Activated naive CD4-positive, alpha-beta T cell treated with anti-CD3 and anti-CD28 coated beads, Interleukin-2, amount 10 ng/mL, durations not matched to agents 7 days and 5 days (primary cell): ENCODE measurements at regions of chr12 and their contacts with region 1.

Region 1: GRCh38 chr12:75480469-75480949 is at the start of gene GLIPR1:
- DNase-seq: peak; percentile 76
- H3K4me3 Mint-ChIP-seq: peak within 1 kb of the TSS; percentile 93
- H3K27ac Mint-ChIP-seq: peak within 1 kb of the TSS; percentile 98
- H3K4me1 Mint-ChIP-seq: peaks cover 83% of the 10 kb centered on the region
- H3K27me3 Mint-ChIP-seq: no peaks in the 10 kb centered on the region

Region 2: DNA sequence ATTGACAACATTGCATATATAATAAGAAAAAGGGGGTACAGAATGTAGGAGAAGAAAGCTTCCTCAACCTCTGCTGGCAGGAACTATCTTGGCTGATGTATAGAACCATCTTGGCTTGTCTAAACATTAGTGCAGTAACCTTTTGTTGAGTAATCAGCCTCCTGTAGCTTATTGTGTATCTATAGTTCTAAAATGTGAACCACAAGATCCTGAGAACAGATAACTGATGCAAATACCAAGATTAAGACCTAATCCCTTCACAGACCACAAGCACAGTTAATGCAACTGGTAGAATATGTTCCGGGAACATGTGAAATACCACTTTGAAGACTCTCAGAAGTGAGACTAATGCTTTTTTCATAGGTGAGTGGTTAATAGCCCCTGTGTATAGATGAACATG is 220.2 kb before region 1 on chr12:
- CTCF ChIA-PET with region 1: no interaction called
- DNase-seq: no peak
- H3K4me3 Mint-ChIP-seq: no peak overlapping the region
- H3K27ac Mint-ChIP-seq: no peak overlapping the region
- H3K4me1 Mint-ChIP-seq: peaks cover 12% of the 10 kb centered on the region
- H3K27me3 Mint-ChIP-seq: no peaks in the 10 kb centered on the region

Region 3: GRCh38 chr12:75334384-75335030 is 146.0 kb before region 1 on chr12 and contains the start of gene GLIPR1L1:
- CTCF ChIA-PET with region 1: interaction called, 18 read pairs
- DNase-seq: peak; percentile 87
- H3K4me3 Mint-ChIP-seq: peak within 1 kb of the TSS; percentile 48
- H3K27ac Mint-ChIP-seq: no peak within 1 kb of the TSS
- H3K4me1 Mint-ChIP-seq: peaks cover 30% of the 10 kb centered on the region
- H3K27me3 Mint-ChIP-seq: peaks cover 30% of the 10 kb centered on the region

Region 4: DNA sequence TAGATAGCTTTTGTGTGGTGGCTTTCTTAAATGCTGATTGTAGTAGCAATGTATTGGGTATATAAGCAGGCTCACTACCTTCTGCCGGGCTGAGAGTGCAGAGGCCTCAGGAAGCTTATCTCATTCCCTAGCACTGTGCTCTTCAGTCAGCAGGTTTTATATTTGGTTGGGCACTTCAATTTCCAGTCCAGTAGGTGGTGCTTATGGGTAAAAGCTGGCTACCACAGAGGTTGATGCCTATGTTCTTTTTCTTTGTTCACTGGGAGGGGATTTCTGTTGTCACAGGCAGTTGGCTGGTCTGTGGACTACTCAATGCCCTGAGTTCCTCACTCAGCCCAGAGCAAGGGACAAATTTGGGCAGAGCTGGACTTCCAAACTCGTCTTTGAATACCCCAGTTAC is 42.9 kb before region 1 on chr12:
- CTCF ChIA-PET with region 1: interaction called, 27 read pairs
- DNase-seq: peak; percentile 29
- H3K4me3 Mint-ChIP-seq: no peak overlapping the region
- H3K27ac Mint-ChIP-seq: no peak overlapping the region
- H3K4me1 Mint-ChIP-seq: peaks cover 19% of the 10 kb centered on the region
- H3K27me3 Mint-ChIP-seq: peaks cover 31% of the 10 kb centered on the region

Region 5: GRCh38 chr12:75511116-75512048 is 30.9 kb after region 1 on chr12 and contains the start of gene KRR1:
- CTCF ChIA-PET with region 1: interaction called, 35 read pairs
- DNase-seq: peak; percentile 94
- H3K4me3 Mint-ChIP-seq: peak within 1 kb of the TSS; percentile 97
- H3K27ac Mint-ChIP-seq: peak within 1 kb of the TSS; percentile 99
- H3K4me1 Mint-ChIP-seq: peaks cover 34% of the 10 kb centered on the region
- H3K27me3 Mint-ChIP-seq: no peaks in the 10 kb centered on the region

Region 6: GRCh38 chr12:75542942-75543341 is 62.4 kb after region 1 on chr12:
- CTCF ChIA-PET with region 1: no interaction called
- DNase-seq: no peak
- H3K4me3 Mint-ChIP-seq: no peak overlapping the region
- H3K27ac Mint-ChIP-seq: no peak overlapping the region
- H3K4me1 Mint-ChIP-seq: no peaks in the 10 kb centered on the region
- H3K27me3 Mint-ChIP-seq: peaks cover 7% of the 10 kb centered on the region

Region 7: DNA sequence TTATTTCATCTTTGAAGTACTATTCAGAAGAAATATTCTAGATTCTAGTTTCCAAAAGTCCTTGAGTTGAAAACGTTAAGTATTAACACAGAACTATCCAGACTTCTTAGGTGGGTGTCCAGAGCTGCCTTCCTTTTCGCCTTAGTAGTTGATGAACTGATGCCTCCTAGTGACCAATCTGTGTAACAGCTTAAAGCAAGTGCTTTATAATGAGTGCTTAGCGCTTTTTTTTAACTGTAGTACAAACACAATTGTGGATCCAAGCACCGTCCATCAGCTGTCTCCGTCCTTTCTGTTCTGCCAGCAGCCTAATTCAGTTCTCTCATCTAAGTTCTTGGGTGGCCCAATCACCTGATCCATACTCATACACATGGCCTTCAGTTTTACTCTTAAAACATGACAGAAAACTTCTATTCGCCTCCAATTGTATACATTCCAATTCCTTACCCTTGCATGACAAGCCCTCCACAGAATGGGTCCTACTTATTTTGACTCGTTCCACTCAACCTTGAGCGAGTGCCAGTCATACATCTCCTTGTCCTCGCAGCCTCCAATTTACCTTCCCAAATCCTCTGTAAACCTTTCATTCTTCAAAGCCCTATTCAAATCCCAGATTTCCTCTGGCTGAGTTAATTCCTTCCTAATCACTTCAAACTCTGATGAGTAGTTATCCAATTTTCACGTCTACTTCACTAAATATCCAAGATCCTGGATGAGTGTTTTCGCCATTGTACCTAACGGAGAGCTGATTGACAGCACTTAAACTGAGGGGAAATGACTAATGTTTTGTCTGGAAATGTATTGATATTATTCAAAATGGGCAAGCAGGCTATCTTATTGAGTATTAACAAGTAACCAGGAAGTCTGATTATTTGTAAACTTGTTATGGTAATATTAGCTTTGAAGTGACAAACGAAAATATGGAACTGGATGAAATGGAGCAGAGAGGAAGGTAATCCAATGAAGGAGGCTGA is 556.9 kb after region 1 on chr12:
- CTCF ChIA-PET with region 1: interaction called, 12 read pairs
- DNase-seq: peak; percentile 24
- H3K4me3 Mint-ChIP-seq: no peak overlapping the region
- H3K27ac Mint-ChIP-seq: no peak overlapping the region
- H3K4me1 Mint-ChIP-seq: peaks cover 10% of the 10 kb centered on the region
- H3K27me3 Mint-ChIP-seq: peaks cover 5% of the 10 kb centered on the region